ENCODE measurements at regions of chr9 and their contacts with region 1.

Region 1: DNA sequence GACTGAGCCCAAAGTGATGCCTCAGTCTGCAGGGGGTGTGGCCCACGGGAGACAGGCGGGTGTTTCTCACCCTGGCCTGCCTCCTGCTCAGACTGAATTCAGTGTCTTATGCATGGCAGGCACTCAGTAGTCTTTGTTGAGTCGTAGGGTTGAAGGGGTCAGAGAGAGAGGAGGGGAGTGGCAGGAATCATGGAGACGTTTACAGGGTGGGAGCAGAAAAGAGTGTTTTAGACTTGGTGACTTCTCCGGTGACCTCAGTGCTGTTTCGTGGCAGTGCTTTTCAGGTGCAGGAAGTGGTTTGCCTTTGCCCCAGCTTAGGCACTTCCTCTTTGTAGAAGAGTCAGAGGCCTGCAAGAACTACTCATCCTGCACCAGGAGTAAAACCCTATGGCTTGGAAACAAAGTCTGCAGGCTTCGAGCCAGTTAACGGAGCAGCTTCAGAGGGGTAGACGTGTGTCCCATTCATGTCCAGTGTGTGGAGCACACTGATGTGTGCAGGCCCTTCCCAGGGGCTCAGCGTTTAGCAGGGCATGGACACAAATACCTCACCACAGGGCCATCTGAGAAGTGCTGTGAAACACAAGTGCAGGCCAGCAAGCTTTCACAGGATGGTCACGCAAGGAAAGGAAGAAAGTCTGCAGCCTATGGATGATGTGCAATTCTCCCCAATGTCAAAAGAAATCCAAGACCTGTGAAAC is 24.5 kb upstream of the SEMA4D start:
- DNase-seq: peak; percentile 33 to 91 (median 88)
- ATAC-seq: peak; percentile 91
- H3K4me3 ChIP-seq: peak overlapping the region; percentile 40
- H3K4me3 Mint-ChIP-seq: peak overlapping the region; percentile 18 to 90 (median 82)
- H3K27ac ChIP-seq: peak overlapping the region; percentile 72
- H3K27ac Mint-ChIP-seq: peak overlapping the region; percentile 94 to 100 (median 97)
- H3K4me1 ChIP-seq: peaks cover 94 to 95% of the 10 kb centered on the region in 2 donors
- H3K4me1 Mint-ChIP-seq: peaks cover 81 to 97% (median 95%) of the 10 kb centered on the region in 7 donors
- H3K27me3 ChIP-seq: no peaks in the 10 kb centered on the region
- H3K27me3 Mint-ChIP-seq: no peaks in the 10 kb centered on the region

Region 2: GRCh38 chr9:89428901-89429890 is 93.2 kb before region 1 on chr9:
- CTCF ChIA-PET with region 1: interaction called, 9 read pairs
- POLR2A ChIA-PET with region 1: interaction called, 4 read pairs
- intact Hi-C with region 1: loop called in 1 of 2 experiments (anchors 1 kb)
- DNase-seq: peak in 7 of 9 donors; percentile 68 to 83 (median 77)
- ATAC-seq: peak; percentile 76
- H3K4me3 ChIP-seq: no peak overlapping the region
- H3K4me3 Mint-ChIP-seq: peak overlapping the region in 9 of 10 donors; percentile 38 to 78 (median 63)
- H3K27ac ChIP-seq: peak overlapping the region; percentile 63
- H3K27ac Mint-ChIP-seq: peak overlapping the region; percentile 84 to 97 (median 92)
- H3K4me1 ChIP-seq: peaks cover 81 to 84% of the 10 kb centered on the region in 2 donors
- H3K4me1 Mint-ChIP-seq: peaks cover 67 to 100% (median 95%) of the 10 kb centered on the region in 7 donors
- H3K27me3 ChIP-seq: no peaks in the 10 kb centered on the region
- H3K27me3 Mint-ChIP-seq: no peaks in the 10 kb centered on the region

Region 3: GRCh38 chr9:89483592-89484522 is 38.6 kb before region 1 on chr9:
- CTCF ChIA-PET with region 1: interaction called, 3 read pairs
- POLR2A ChIA-PET with region 1: interaction called, 24 read pairs
- intact Hi-C with region 1: loop called in 1 of 2 experiments (anchors 1 kb)
- DNase-seq: peak; percentile 41 to 76 (median 66)
- ATAC-seq: peak; percentile 84
- H3K4me3 ChIP-seq: peak overlapping the region; percentile 48
- H3K4me3 Mint-ChIP-seq: peak overlapping the region; percentile 85 to 100 (median 90)
- H3K27ac ChIP-seq: peak overlapping the region; percentile 68
- H3K27ac Mint-ChIP-seq: peak overlapping the region; percentile 88 to 99 (median 93)
- H3K4me1 ChIP-seq: peaks cover 67 to 71% of the 10 kb centered on the region in 2 donors
- H3K4me1 Mint-ChIP-seq: peaks cover 70 to 96% (median 90%) of the 10 kb centered on the region in 7 donors
- H3K27me3 ChIP-seq: no peaks in the 10 kb centered on the region
- H3K27me3 Mint-ChIP-seq: no peaks in the 10 kb centered on the region

Region 4: GRCh38 chr9:89497978-89498851 is 24.2 kb before region 1 on chr9 and contains the start of gene SEMA4D:
- CTCF ChIA-PET with region 1: interaction called, 8 read pairs
- POLR2A ChIA-PET with region 1: interaction called, 31 read pairs
- intact Hi-C with region 1: loop called (anchors 1 kb)
- DNase-seq: peak in 2 of 9 donors; percentile 48 to 71
- ATAC-seq: peak; percentile 22
- H3K4me3 ChIP-seq: peak within 1 kb of the TSS; percentile 67
- H3K4me3 Mint-ChIP-seq: peak within 1 kb of the TSS; percentile 85 to 100 (median 98)
- H3K27ac ChIP-seq: peak within 1 kb of the TSS; percentile 76
- H3K27ac Mint-ChIP-seq: peak within 1 kb of the TSS; percentile 86 to 99 (median 94)
- H3K4me1 ChIP-seq: peaks cover 72 to 75% of the 10 kb centered on the region in 2 donors
- H3K4me1 Mint-ChIP-seq: peaks cover 72 to 90% (median 77%) of the 10 kb centered on the region in 7 donors
- H3K27me3 ChIP-seq: no peaks in the 10 kb centered on the region
- H3K27me3 Mint-ChIP-seq: no peaks in the 10 kb centered on the region
- total RNA-seq, gene SEMA4D: 389 to 465 (median 460) TPM

Region 5: GRCh38 chr9:89536145-89536574 is 13.8 kb after region 1 on chr9:
- CTCF ChIA-PET with region 1: interaction called, 8 read pairs
- POLR2A ChIA-PET with region 1: interaction called, 139 read pairs
- intact Hi-C with region 1: loop called (anchors 1 kb)
- DNase-seq: peak in 7 of 9 donors; percentile 51 to 79 (median 73)
- ATAC-seq: peak; percentile 81
- H3K4me3 ChIP-seq: peak overlapping the region; percentile 11
- H3K4me3 Mint-ChIP-seq: peak overlapping the region; percentile 67 to 83 (median 75)
- H3K27ac ChIP-seq: peak overlapping the region; percentile 71
- H3K27ac Mint-ChIP-seq: peak overlapping the region; percentile 69 to 100 (median 92)
- H3K4me1 ChIP-seq: peaks cover 82 to 93% of the 10 kb centered on the region in 2 donors
- H3K4me1 Mint-ChIP-seq: peaks cover 72 to 97% (median 95%) of the 10 kb centered on the region in 7 donors
- H3K27me3 ChIP-seq: no peaks in the 10 kb centered on the region
- H3K27me3 Mint-ChIP-seq: no peaks in the 10 kb centered on the region